ENCODE measurements at regions of chr16 and their contacts with region 1.

Region 1: GRCh38 chr16:23729503-23730424 is 16.7 kb upstream of the ERN2 start:
- DNase-seq: no peak
- ATAC-seq: no peak
- H3K4me3 Mint-ChIP-seq: no peak overlapping the region
- H3K27ac Mint-ChIP-seq: no peak overlapping the region
- H3K4me1 Mint-ChIP-seq: peaks cover 8% of the 10 kb centered on the region
- H3K27me3 Mint-ChIP-seq: peaks cover 11% of the 10 kb centered on the region

Region 2: GRCh38 chr16:23544436-23544835 is 185.3 kb before region 1 on chr16:
- CTCF ChIA-PET with region 1: no interaction called
- POLR2A ChIA-PET with region 1: no interaction called
- intact Hi-C with region 1: no loop called
- DNase-seq: no peak
- ATAC-seq: no peak
- H3K4me3 Mint-ChIP-seq: no peak overlapping the region
- H3K27ac Mint-ChIP-seq: no peak overlapping the region
- H3K4me1 Mint-ChIP-seq: no peaks in the 10 kb centered on the region
- H3K27me3 Mint-ChIP-seq: no peaks in the 10 kb centered on the region

Region 3: DNA sequence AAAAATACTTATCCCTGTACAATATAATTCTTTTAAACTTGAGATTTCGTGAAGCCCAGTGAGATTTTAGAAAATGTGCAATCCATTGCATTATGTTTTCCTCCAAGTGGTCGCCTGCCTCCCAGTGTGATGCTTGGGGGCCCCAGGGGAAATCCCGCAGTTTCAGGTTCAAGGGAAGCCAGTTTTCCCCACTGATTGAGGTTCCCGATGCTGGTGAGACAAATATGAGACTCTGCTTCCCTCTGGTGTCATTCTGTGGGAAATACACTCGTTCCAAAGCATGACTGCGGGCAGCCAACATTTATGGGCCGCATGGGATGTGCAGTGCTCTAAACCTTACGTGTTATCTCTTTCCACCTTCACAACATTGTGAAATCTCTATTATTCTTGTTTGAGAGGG is 306.9 kb after region 1 on chr16:
- CTCF ChIA-PET with region 1: interaction called, 12 read pairs
- POLR2A ChIA-PET with region 1: no interaction called
- intact Hi-C with region 1: loop called in 1 of 2 experiments (anchors 2 kb)
- DNase-seq: peak; percentile 47
- ATAC-seq: peak; percentile 60
- H3K4me3 Mint-ChIP-seq: no peak overlapping the region
- H3K27ac Mint-ChIP-seq: no peak overlapping the region
- H3K4me1 Mint-ChIP-seq: peaks cover 29% of the 10 kb centered on the region
- H3K27me3 Mint-ChIP-seq: no peaks in the 10 kb centered on the region

Region 4: DNA sequence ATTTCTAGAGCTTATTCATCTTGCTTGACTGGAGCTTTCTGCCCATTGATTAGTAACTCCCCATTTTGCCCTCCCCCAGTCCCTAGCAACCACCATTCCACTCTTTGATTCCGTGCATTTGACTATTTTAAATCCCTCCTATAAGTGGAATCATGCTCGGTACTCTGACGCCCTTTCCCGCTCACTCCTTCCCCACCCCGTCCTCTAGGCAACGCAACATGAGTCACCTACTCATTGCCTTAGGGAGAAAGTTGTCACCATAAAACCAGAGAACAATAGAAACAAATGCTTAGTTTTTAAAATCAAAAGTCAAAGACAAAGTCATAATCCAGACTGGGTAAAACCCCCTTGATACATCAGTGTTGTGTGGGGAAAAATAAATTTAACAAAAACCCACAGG is 764.1 kb after region 1 on chr16:
- CTCF ChIA-PET with region 1: no interaction called
- POLR2A ChIA-PET with region 1: no interaction called
- intact Hi-C with region 1: no loop called
- DNase-seq: no peak
- ATAC-seq: no peak
- H3K4me3 Mint-ChIP-seq: no peak overlapping the region
- H3K27ac Mint-ChIP-seq: no peak overlapping the region
- H3K4me1 Mint-ChIP-seq: no peaks in the 10 kb centered on the region
- H3K27me3 Mint-ChIP-seq: peaks cover 7% of the 10 kb centered on the region